Esophagus muscularis mucosa (tissue), 4 donors: ENCODE measurements at regions of chr6 and their contacts with region 1.

Region 1: DNA sequence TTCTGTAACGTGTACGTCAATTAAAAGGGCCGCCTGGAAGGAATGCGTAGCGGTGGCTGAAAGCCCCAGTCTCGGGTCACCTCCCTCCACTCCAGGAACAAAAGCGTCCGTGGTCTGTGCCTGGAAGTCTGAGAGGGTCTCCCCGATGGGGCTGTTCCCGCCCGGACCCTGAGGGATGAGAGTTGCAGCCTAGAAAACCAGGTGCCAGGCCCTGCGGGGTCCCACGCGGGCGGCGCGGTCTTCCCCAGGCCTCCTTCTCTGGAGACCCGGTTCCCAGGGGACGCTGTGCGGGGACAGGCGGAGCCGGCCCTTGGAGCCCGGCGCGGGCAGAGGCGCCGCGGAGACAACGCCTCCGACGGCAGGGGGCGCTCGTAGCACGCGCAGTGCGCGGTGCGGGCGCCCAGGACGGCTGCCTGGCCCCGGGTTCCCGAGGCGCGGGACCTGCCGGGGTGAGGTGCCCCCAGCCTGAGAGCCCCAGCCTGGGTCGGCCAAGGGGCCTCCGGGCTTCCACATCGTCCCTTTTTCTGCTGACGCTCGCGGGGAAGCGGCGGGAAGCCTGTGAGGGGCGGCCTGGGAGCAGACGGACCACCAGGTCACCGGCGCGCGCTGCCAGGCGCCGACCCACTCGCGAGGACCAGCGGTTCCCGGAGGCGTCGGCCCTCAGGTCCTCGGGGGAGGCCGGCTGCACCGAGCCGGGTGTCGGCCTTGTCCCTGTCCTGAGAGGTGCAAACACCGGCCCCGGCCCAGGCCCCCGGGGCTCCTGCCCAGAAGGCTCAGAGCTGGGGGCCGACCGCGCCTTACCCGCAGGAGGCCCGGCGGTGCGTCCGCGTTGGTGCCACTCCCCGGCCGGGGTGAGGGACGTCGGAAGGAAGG is 5.3 kb upstream of the FOXC1 start:
- DNase-seq: no peak
- H3K4me3 ChIP-seq: peak overlapping the region; percentile 57 to 68 (median 60)
- H3K27ac ChIP-seq: no peak overlapping the region
- H3K4me1 ChIP-seq: peaks cover 21 to 45% (median 38%) of the 10 kb centered on the region in 4 donors
- H3K27me3 ChIP-seq: peaks cover 11 to 88% (median 39%) of the 10 kb centered on the region in 4 donors
- CTCF ChIP-seq: peak; percentile 86 to 97 (median 95)
- EP300 ChIP-seq: no peak
- POLR2A ChIP-seq: no peak

Region 2: GRCh38 chr6:1686117-1687098 is 82.0 kb after region 1 on chr6:
- intact Hi-C with region 1: no loop called
- DNase-seq: no peak
- H3K4me3 ChIP-seq: no peak overlapping the region
- H3K27ac ChIP-seq: peak overlapping the region in 1 of 4 donors; percentile 30
- H3K4me1 ChIP-seq: peaks cover 0 to 7% (median 5%) of the 10 kb centered on the region in 4 donors
- H3K27me3 ChIP-seq: no peaks in the 10 kb centered on the region
- CTCF ChIP-seq: peak in 2 of 3 experiments; percentile 12 to 24
- EP300 ChIP-seq: no peak
- POLR2A ChIP-seq: no peak

Region 3: DNA sequence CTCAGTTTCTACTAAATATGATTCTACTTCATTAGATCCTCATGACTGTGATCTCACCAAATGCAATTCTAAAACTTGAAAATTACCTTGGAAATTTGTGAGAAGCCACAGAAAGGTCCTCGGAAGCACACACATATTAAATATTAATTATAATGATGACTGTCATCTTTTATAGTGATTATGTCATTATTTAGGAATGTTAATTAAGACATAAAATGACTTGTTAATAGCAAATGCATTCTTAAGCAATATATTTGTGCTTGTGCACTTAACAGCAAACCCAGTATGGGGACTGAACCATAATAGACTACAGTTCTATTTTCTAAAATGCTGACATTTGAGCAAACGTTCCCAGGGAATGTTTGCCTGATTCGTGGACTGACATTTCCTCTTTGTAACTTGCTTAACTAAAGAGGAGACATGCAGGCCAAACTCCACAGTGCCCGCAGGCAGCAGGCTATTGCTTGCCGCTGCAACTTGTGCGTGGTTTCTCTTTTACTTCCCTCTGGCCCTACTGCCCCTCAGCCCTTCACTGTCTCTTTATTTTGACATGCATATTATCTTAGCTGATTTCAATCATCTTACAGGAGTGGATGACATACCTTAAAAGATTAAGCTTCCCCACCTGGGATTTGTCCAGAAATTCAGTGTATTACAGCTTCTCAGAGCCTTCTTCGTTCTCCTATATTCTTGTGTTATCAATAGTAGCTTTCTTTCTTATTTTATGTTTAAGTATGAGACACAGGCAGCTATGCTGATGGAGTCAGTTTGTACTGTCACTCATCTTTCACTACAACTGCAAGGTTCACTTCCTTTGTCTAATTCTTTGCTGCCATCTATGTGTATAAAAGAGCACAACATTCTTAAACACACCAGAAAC is 499.5 kb after region 1 on chr6:
- intact Hi-C with region 1: loop called (anchors 2 kb)
- DNase-seq: no peak
- H3K4me3 ChIP-seq: peak overlapping the region in 1 of 4 donors; percentile 11
- H3K27ac ChIP-seq: peak overlapping the region in 1 of 4 donors; percentile 32
- H3K4me1 ChIP-seq: peaks cover 0 to 7% (median 0%) of the 10 kb centered on the region in 4 donors
- H3K27me3 ChIP-seq: no peaks in the 10 kb centered on the region
- CTCF ChIP-seq: peak; percentile 45 to 58 (median 52)
- EP300 ChIP-seq: no peak
- POLR2A ChIP-seq: no peak

Region 4: DNA sequence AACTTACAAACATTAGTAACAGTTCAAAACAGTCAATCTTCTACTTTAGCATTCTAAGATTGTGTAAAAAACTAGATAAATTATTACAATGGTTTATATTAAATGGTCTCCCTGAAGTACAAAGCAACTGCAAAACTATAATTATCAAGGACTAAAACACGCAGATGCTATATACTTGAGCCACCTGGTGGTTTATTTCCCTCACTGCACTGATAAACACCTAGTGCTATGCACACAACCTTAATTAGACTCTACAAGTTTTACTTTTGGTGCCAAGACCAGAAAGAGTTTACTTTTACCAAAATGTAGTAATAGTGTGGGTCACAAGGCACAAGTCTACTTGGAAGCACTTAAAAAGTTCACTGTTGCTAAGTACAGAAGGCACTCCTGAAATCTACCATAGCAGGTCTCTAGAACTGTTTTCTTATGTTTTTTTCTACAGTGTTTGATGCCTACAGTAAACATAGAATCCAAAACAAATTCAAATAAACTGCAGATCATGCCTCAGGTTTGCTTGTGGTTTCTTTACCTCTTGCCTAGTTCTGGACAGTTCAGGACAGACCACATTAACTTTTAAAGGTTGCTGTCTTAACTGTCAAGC is 591.8 kb after region 1 on chr6:
- intact Hi-C with region 1: loop called (anchors 2 kb)
- DNase-seq: no peak
- H3K4me3 ChIP-seq: no peak overlapping the region
- H3K27ac ChIP-seq: no peak overlapping the region
- H3K4me1 ChIP-seq: peaks cover 0 to 9% (median 7%) of the 10 kb centered on the region in 4 donors
- H3K27me3 ChIP-seq: no peaks in the 10 kb centered on the region
- CTCF ChIP-seq: peak; percentile 81 to 83 (median 81)
- EP300 ChIP-seq: no peak
- POLR2A ChIP-seq: no peak

Region 5: GRCh38 chr6:2245094-2245876 is 640.9 kb after region 1 on chr6 and contains the start of gene GMDS:
- intact Hi-C with region 1: loop called (anchors 5 kb)
- DNase-seq: peak; percentile 93
- H3K4me3 ChIP-seq: peak within 1 kb of the TSS; percentile 80 to 98 (median 86)
- H3K27ac ChIP-seq: peak within 1 kb of the TSS; percentile 84 to 91 (median 89)
- H3K4me1 ChIP-seq: peaks cover 14 to 24% (median 22%) of the 10 kb centered on the region in 4 donors
- H3K27me3 ChIP-seq: no peaks in the 10 kb centered on the region
- CTCF ChIP-seq: no peak
- EP300 ChIP-seq: no peak
- POLR2A ChIP-seq: peak; percentile 50
- total RNA-seq, gene GMDS: 3.6 to 14.1 (median 6.0) TPM

Region 6: GRCh38 chr6:2353412-2354137 is 749.2 kb after region 1 on chr6:
- intact Hi-C with region 1: loop called (anchors 5 kb)
- DNase-seq: no peak
- H3K4me3 ChIP-seq: no peak overlapping the region
- H3K27ac ChIP-seq: peak overlapping the region in 2 of 4 donors; percentile 1 to 12
- H3K4me1 ChIP-seq: peaks cover 6 to 15% (median 10%) of the 10 kb centered on the region in 4 donors
- H3K27me3 ChIP-seq: no peaks in the 10 kb centered on the region
- CTCF ChIP-seq: peak; percentile 78 to 81 (median 80)
- EP300 ChIP-seq: no peak
- POLR2A ChIP-seq: no peak

Region 7: GRCh38 chr6:2448820-2449571 is 844.6 kb after region 1 on chr6:
- intact Hi-C with region 1: loop called (anchors 2 kb)
- DNase-seq: no peak
- H3K4me3 ChIP-seq: peak overlapping the region; percentile 11 to 49 (median 34)
- H3K27ac ChIP-seq: no peak overlapping the region
- H3K4me1 ChIP-seq: peaks cover 6 to 19% (median 9%) of the 10 kb centered on the region in 4 donors
- H3K27me3 ChIP-seq: no peaks in the 10 kb centered on the region
- CTCF ChIP-seq: peak; percentile 53 to 73 (median 68)
- EP300 ChIP-seq: no peak
- POLR2A ChIP-seq: no peak